ENCODE measurements at regions of chr3 and their contacts with region 1.

Region 1: GRCh38 chr3:6204891-6205290 is 656.0 kb upstream of the GRM7 start:
- DNase-seq: no peak
- CTCF ChIP-seq: peak; percentile 22

Region 2: DNA sequence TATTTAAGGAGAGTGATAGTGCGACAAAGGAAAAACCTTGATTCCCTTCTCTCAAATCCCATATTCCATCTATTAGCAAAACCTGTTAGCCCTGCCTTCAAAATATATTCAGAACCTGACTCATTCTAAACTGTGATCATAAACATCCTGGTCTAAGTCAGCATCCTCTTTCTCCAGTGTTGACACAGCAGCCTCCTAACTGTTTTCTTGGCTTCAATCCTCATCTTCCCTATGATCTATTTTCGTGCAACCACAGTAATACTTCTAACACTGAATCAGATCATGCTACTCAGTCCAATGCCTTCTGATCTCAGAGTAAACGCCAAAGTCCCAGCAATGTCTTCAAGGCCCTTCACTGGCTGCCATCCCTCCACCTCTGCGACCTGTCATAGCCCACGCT is 232.3 kb before region 1 on chr3:
- CTCF ChIA-PET with region 1: no interaction called
- POLR2A ChIA-PET with region 1: no interaction called
- DNase-seq: no peak
- CTCF ChIP-seq: no peak

Region 3: DNA sequence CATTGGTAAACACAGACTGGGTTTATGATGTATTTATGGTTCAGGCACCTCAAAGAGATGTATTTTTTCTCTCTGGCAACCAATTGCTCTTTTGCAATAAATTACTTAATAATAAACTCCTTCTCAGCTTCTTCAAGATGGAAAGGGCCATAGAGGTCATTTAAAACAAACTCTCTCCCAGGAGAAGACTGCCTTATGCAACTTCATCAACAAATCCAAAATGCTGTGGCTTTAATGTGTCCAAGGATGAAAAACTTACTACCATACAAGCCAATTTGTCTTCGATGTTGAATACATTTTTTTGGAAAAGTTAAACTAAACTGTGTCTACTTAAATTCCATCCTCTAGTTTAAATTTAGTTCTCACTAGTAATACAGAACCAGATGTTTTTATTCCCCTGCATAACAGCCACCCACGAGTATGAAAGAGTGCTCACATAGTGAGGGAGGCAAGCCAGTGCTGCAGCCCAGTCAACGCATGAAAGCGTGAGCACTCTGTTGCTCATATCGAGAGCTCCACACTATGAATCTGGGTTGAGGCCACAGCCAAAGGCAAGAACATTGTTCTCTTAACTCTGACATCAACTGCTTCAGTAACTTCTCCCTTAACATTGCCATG is 105.3 kb before region 1 on chr3:
- CTCF ChIA-PET with region 1: no interaction called
- POLR2A ChIA-PET with region 1: no interaction called
- DNase-seq: no peak
- CTCF ChIP-seq: no peak

Region 4: GRCh38 chr3:6189384-6189783 is 15.5 kb before region 1 on chr3:
- CTCF ChIA-PET with region 1: interaction called, 21 read pairs
- POLR2A ChIA-PET with region 1: no interaction called
- DNase-seq: no peak
- CTCF ChIP-seq: no peak

Region 5: DNA sequence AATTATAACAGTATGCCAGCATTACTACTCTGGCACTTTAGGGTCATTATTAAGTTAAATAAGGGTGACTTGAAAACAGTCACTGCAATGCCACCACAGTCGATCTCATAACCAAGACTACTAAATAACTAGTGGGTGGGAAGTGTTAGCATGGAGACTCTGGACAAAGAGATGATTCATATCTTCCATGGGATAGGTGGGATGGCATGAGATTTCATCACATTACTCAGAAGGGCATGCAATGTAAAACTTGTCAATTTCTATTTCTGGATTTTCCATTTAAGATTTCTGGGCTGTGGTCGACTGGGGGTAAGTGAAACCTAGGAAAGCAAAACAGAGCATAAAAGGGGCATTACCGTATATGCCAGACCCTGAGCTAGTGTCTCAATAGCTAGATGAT is 117.1 kb after region 1 on chr3:
- CTCF ChIA-PET with region 1: no interaction called
- POLR2A ChIA-PET with region 1: no interaction called
- DNase-seq: no peak
- CTCF ChIP-seq: no peak

Region 6: GRCh38 chr3:6435951-6436350 is 231.1 kb after region 1 on chr3:
- CTCF ChIA-PET with region 1: no interaction called
- POLR2A ChIA-PET with region 1: no interaction called
- DNase-seq: no peak
- CTCF ChIP-seq: no peak

Measured in GM10248 (cell line).